ENCODE measurements at regions of chr20 and their contacts with region 1.

Region 1: GRCh38 chr20:14860410-14860814 is 523.0 kb upstream of the FLRT3 start:
- DNase-seq: no peak
- H3K4me3 ChIP-seq: no peak overlapping the region
- H3K27ac ChIP-seq: no peak overlapping the region
- H3K4me1 ChIP-seq: no peaks in the 10 kb centered on the region
- H3K27me3 ChIP-seq: no peaks in the 10 kb centered on the region
- CTCF ChIP-seq: no peak

Region 2: GRCh38 chr20:14790771-14791620 is 69.4 kb before region 1 on chr20:
- CTCF ChIA-PET with region 1: interaction called, 29 read pairs
- POLR2A ChIA-PET with region 1: no interaction called
- intact Hi-C with region 1: no loop called
- DNase-seq: no peak
- H3K4me3 ChIP-seq: no peak overlapping the region
- H3K27ac ChIP-seq: no peak overlapping the region
- H3K4me1 ChIP-seq: no peaks in the 10 kb centered on the region
- H3K27me3 ChIP-seq: no peaks in the 10 kb centered on the region
- CTCF ChIP-seq: no peak

Region 3: DNA sequence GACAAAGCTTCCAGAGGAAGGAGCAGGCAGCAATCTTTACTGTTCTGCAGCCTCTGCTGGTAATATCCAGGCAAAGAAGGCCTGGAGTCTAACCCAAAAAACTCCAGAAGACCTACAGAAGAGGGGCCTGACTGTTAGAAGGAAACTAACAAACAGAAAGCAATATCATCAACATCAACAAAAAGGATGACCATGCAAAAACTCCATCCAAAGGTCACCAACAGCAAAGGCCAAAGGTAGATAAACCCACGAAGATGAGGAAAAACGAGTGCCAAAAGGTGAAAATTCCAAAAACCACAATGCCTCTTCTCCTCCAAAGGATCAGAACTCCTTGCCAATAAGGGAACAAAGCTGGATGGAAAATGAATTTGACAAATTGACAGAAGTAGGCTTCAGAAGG is 53.2 kb before region 1 on chr20:
- CTCF ChIA-PET with region 1: no interaction called
- POLR2A ChIA-PET with region 1: no interaction called
- intact Hi-C with region 1: no loop called
- DNase-seq: no peak
- H3K4me3 ChIP-seq: no peak overlapping the region
- H3K27ac ChIP-seq: no peak overlapping the region
- H3K4me1 ChIP-seq: no peaks in the 10 kb centered on the region
- H3K27me3 ChIP-seq: no peaks in the 10 kb centered on the region
- CTCF ChIP-seq: no peak

Region 4: DNA sequence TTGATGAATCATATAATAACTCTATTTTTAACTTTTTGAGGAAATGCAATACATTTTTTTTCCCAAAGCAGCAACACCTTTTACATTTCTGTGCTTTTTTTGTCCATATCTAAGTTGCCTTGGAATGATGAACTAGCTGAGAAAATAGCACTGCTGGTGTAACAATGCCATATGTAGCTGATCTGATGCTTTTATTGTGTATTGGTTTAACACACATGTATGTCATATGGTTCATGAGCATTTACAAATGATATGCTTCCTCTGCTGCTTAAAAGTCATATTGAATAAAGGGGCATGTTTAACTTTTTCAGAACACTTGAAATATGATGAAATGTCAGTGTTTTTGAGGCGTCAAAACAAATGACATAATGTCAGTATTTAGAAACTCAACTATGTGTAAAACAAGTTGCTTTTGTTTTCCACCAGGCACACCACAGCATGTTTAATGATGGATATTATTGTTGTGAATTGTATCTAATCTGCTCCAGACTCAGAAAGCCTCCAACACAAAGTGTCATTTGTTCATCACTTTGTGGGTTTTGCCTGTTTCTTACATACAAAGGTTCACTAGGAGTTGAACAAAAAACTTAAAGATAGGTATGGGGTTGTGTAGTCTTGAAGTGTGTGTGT is 252.8 kb after region 1 on chr20:
- CTCF ChIA-PET with region 1: no interaction called
- POLR2A ChIA-PET with region 1: no interaction called
- intact Hi-C with region 1: no loop called
- DNase-seq: no peak
- H3K4me3 ChIP-seq: no peak overlapping the region
- H3K27ac ChIP-seq: no peak overlapping the region
- H3K4me1 ChIP-seq: no peaks in the 10 kb centered on the region
- H3K27me3 ChIP-seq: no peaks in the 10 kb centered on the region
- CTCF ChIP-seq: no peak

Measured in PC-9 (cell line).